WTC11 (cell line): ENCODE measurements at regions of chr19 and their contacts with region 1.

Region 1: GRCh38 chr19:41263850-41264580 is at the start of gene HNRNPUL1:
- DNase-seq: peak; percentile 98
- ATAC-seq: peak; percentile 83
- H3K4me3 Mint-ChIP-seq: peak within 1 kb of the TSS; percentile 95
- H3K27ac Mint-ChIP-seq: peak within 1 kb of the TSS; percentile 99
- H3K4me1 Mint-ChIP-seq: peaks cover 27% of the 10 kb centered on the region
- H3K27me3 Mint-ChIP-seq: no peaks in the 10 kb centered on the region; the same call in 1 of the 2 replicates
- CTCF ChIP-seq: no peak
- total RNA-seq, gene HNRNPUL1: 246 to 282 TPM (median 257 TPM) in 3 replicates

Region 2: GRCh38 chr19:41123716-41124294 is 140.2 kb before region 1 on chr19:
- CTCF ChIA-PET with region 1: interaction called, 17 read pairs
- POLR2A ChIA-PET with region 1: no interaction called
- DNase-seq: no peak
- ATAC-seq: no peak
- H3K4me3 Mint-ChIP-seq: no peak overlapping the region
- H3K27ac Mint-ChIP-seq: no peak overlapping the region
- H3K4me1 Mint-ChIP-seq: peaks cover 21% of the 10 kb centered on the region
- H3K27me3 Mint-ChIP-seq: peaks cover 9% of the 10 kb centered on the region
- CTCF ChIP-seq: no peak

Region 3: GRCh38 chr19:41206926-41207750 is 56.9 kb before region 1 on chr19:
- CTCF ChIA-PET with region 1: interaction called, 95 read pairs
- POLR2A ChIA-PET with region 1: interaction called, 12 read pairs
- DNase-seq: no peak
- ATAC-seq: peak; percentile 64
- H3K4me3 Mint-ChIP-seq: no peak overlapping the region
- H3K27ac Mint-ChIP-seq: peak overlapping the region; percentile 54
- H3K4me1 Mint-ChIP-seq: peaks cover 2% of the 10 kb centered on the region
- H3K27me3 Mint-ChIP-seq: no peaks in the 10 kb centered on the region
- CTCF ChIP-seq: no peak

Region 4: GRCh38 chr19:41248895-41249294 is 15.1 kb before region 1 on chr19:
- CTCF ChIA-PET with region 1: interaction called, 28 read pairs
- POLR2A ChIA-PET with region 1: interaction called, 5 read pairs
- DNase-seq: no peak
- ATAC-seq: peak; percentile 67
- H3K4me3 Mint-ChIP-seq: no peak overlapping the region
- H3K27ac Mint-ChIP-seq: no peak overlapping the region
- H3K4me1 Mint-ChIP-seq: no peaks in the 10 kb centered on the region
- H3K27me3 Mint-ChIP-seq: no peaks in the 10 kb centered on the region
- CTCF ChIP-seq: no peak

Region 5: DNA sequence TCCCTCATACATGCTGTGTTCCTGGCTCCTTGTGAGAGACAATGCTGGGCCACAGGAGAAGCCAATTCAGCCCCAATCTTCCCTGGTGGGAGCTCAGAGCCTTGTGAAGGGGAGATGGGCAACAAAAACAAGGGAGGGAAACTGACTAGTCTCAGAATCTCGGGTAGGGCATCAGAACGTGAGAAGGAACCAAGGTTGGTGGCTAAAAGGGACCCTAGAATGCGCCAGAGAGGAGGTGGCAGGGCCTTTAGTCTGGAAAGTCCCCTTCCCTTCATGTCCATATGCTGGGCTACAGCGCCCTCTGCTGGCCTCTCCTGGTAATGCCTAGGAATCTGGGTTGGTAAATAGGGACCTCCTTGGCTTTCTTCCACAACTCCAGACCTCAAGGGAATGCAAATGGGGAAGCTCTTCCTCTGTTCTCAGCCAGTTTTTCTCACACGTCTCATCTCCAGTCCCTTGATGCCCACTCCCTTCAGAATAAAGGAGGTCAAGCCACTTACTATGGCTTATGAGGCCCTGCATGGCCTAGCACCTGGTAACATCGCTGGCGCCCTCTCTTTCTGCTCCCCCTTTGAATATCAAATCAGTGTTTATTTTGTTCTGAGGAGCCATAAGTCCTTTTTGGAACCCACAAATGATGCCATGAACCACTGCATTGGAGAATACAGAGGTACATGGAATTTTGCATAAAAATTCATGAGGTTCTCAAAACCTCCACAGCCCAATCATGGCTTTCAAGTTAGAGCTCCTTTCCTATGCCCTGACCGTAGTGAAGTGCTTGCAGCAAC is 44.6 kb after region 1 on chr19:
- CTCF ChIA-PET with region 1: interaction called, 26 read pairs
- POLR2A ChIA-PET with region 1: interaction called, 4 read pairs
- DNase-seq: peak; percentile 99
- ATAC-seq: peak; percentile 66
- H3K4me3 Mint-ChIP-seq: peak overlapping the region; percentile 96
- H3K27ac Mint-ChIP-seq: peak overlapping the region; percentile 96
- H3K4me1 Mint-ChIP-seq: peaks cover 21% of the 10 kb centered on the region
- H3K27me3 Mint-ChIP-seq: no peaks in the 10 kb centered on the region
- CTCF ChIP-seq: peak; percentile 98

Region 6: DNA sequence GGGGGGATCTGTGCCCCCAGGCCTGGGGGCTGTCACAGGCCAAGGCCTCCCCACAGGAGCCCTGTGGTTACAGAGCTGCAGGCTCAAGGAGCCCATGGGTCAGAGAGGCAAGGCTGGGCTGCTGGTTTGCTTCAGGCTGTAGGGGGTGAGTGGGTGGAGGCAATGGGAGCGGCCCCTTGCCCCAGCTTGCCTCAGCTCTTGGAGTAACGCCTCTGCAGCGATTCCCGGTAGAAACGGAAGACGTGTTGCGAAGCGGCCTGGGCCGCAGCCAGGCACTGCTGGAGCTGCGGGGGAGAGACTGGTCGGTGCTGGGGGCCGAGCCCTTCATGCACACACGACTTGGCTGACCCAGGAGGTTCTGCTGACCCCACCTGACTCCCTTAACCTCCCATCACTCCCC is 122.4 kb after region 1 on chr19:
- CTCF ChIA-PET with region 1: no interaction called
- POLR2A ChIA-PET with region 1: no interaction called
- DNase-seq: no peak
- ATAC-seq: no peak
- H3K4me3 Mint-ChIP-seq: no peak overlapping the region
- H3K27ac Mint-ChIP-seq: no peak overlapping the region
- H3K4me1 Mint-ChIP-seq: no peaks in the 10 kb centered on the region
- H3K27me3 Mint-ChIP-seq: no peaks in the 10 kb centered on the region
- CTCF ChIP-seq: no peak

Region 7: GRCh38 chr19:41420101-41420880 is 156.3 kb after region 1 on chr19:
- CTCF ChIA-PET with region 1: no interaction called
- POLR2A ChIA-PET with region 1: no interaction called
- DNase-seq: no peak
- ATAC-seq: no peak
- H3K4me3 Mint-ChIP-seq: no peak overlapping the region
- H3K27ac Mint-ChIP-seq: no peak overlapping the region
- H3K4me1 Mint-ChIP-seq: no peaks in the 10 kb centered on the region
- H3K27me3 Mint-ChIP-seq: no peaks in the 10 kb centered on the region
- CTCF ChIP-seq: no peak